Heart left ventricle (tissue), 16 donors: ENCODE measurements at regions of chr4 and their contacts with region 1.

Region 1: GRCh38 chr4:76515975-76516843 is 81.2 kb downstream of the SHROOM3 start:
- DNase-seq: no peak
- ATAC-seq: no peak
- H3K4me3 ChIP-seq: no peak overlapping the region
- H3K27ac ChIP-seq: no peak overlapping the region
- H3K4me1 ChIP-seq: peaks cover 0 to 8% (median 0%) of the 10 kb centered on the region in 12 donors
- H3K27me3 ChIP-seq: no peaks in the 10 kb centered on the region
- CTCF ChIP-seq: no peak
- POLR2A ChIP-seq: no peak

Region 2: GRCh38 chr4:76447393-76447851 is 68.8 kb before region 1 on chr4:
- intact Hi-C with region 1: no loop called
- DNase-seq: no peak
- ATAC-seq: peak in 1 of 4 donors; percentile 58
- H3K4me3 ChIP-seq: no peak overlapping the region
- H3K27ac ChIP-seq: peak overlapping the region in 1 of 12 donors; percentile 43
- H3K4me1 ChIP-seq: peaks cover 0 to 17% (median 1%) of the 10 kb centered on the region in 12 donors
- H3K27me3 ChIP-seq: no peaks in the 10 kb centered on the region
- CTCF ChIP-seq: no peak
- POLR2A ChIP-seq: no peak

Region 3: GRCh38 chr4:76658231-76659102 is 142.3 kb after region 1 on chr4:
- intact Hi-C with region 1: loop called in 3 of 10 experiments (anchors 10 kb)
- DNase-seq: no peak
- ATAC-seq: no peak
- H3K4me3 ChIP-seq: no peak overlapping the region
- H3K27ac ChIP-seq: peak overlapping the region in 1 of 12 donors; percentile 9
- H3K4me1 ChIP-seq: peaks cover 0 to 39% (median 11%) of the 10 kb centered on the region in 12 donors
- H3K27me3 ChIP-seq: no peaks in the 10 kb centered on the region
- CTCF ChIP-seq: no peak
- POLR2A ChIP-seq: no peak

Region 4: DNA sequence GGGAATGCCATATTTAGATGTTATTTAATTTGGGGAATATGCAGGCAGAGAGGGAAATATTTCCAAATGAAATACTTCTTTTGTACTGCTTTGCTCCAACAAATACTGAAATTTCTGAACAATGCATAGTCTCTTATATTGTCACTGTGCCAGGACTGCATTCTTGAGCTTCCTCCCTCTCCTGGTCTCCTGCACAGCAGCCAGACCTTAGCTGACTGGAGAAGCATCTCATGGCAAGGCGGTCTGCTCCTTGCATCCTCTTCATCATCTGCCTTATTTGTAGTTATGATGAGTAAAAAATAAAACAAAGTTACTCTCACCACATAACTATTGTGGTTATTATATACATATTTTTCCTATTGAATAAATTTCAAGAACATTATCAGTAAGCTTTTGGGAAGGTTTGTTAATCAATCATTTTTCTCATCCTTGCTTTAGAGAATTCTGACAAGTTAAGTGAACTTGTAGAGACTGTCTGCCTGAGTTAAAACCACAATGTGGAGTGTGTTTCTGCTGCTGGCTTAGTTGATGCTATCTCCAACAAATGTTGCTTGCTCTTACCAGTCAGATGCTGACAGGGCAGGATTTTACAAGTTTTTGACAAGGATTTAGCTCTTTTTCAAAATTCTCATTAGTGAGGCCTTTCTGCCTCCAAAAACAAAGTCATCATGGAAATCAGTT is 228.2 kb after region 1 on chr4:
- intact Hi-C with region 1: loop called in 2 of 10 experiments (anchors 5 kb)
- DNase-seq: no peak
- ATAC-seq: no peak
- H3K4me3 ChIP-seq: no peak overlapping the region
- H3K27ac ChIP-seq: no peak overlapping the region
- H3K4me1 ChIP-seq: peaks cover 0 to 10% (median 0%) of the 10 kb centered on the region in 12 donors
- H3K27me3 ChIP-seq: no peaks in the 10 kb centered on the region
- CTCF ChIP-seq: no peak
- POLR2A ChIP-seq: no peak

Region 5: GRCh38 chr4:76758290-76758882 is 242.2 kb after region 1 on chr4:
- intact Hi-C with region 1: loop called (anchors 2 to 5 kb)
- DNase-seq: no peak
- ATAC-seq: peak; percentile 36 to 66 (median 52)
- H3K4me3 ChIP-seq: no peak overlapping the region
- H3K27ac ChIP-seq: peak overlapping the region in 2 of 12 donors; percentile 2 to 5
- H3K4me1 ChIP-seq: peaks cover 0 to 29% (median 10%) of the 10 kb centered on the region in 12 donors
- H3K27me3 ChIP-seq: peaks cover 0 to 3% (median 0%) of the 10 kb centered on the region in 9 donors
- CTCF ChIP-seq: peak; percentile 66 to 87 (median 76)
- POLR2A ChIP-seq: no peak

Region 6: GRCh38 chr4:77044461-77045150 is 528.4 kb after region 1 on chr4:
- intact Hi-C with region 1: loop called in 7 of 10 experiments (anchors 2 to 10 kb)
- DNase-seq: no peak
- ATAC-seq: peak in 1 of 4 donors; percentile 29
- H3K4me3 ChIP-seq: no peak overlapping the region
- H3K27ac ChIP-seq: peak overlapping the region in 1 of 12 donors; percentile 25
- H3K4me1 ChIP-seq: peaks cover 0 to 19% (median 0%) of the 10 kb centered on the region in 12 donors
- H3K27me3 ChIP-seq: no peaks in the 10 kb centered on the region
- CTCF ChIP-seq: peak; percentile 40 to 67 (median 54)
- POLR2A ChIP-seq: no peak

Region 7: GRCh38 chr4:77203380-77204197 is 687.4 kb after region 1 on chr4:
- intact Hi-C with region 1: loop called in 7 of 10 experiments (anchors 2 to 10 kb)
- DNase-seq: peak in 4 of 5 donors; percentile 44 to 65 (median 54)
- ATAC-seq: peak; percentile 47 to 85 (median 82)
- H3K4me3 ChIP-seq: no peak overlapping the region
- H3K27ac ChIP-seq: no peak overlapping the region
- H3K4me1 ChIP-seq: peaks cover 0 to 4% (median 0%) of the 10 kb centered on the region in 12 donors
- H3K27me3 ChIP-seq: peaks cover 0 to 4% (median 0%) of the 10 kb centered on the region in 9 donors
- CTCF ChIP-seq: peak; percentile 54 to 83 (median 74)
- POLR2A ChIP-seq: no peak

Region 8: DNA sequence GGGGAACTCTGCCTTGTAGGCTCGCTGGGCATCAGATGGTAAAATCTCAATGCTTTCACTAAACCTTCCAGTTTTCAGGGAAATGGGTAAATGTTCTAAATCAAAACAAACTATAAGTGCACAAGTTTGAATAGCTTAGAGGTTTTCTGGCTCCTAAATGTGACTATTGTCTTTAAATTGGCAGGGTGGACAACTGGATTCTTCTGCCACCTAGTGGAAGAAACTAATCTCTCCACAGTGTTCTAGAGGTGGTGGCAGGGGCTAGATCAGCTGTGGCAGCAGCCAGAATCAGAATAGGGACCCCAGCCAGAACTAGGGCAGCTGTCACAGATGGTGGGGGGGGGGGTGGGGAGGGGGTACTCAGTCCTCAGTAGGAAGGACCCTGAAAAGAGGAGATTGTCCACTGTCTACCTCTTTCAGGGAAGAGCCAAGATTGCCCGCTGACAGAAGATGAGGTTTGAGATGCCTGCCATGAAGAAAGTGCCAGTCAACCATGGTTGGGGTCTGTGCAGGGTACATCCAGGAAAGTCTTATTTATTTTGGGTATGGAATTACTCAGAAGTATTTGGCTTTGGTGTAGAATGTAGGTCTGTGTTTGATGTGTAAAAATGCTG is 842.2 kb after region 1 on chr4:
- intact Hi-C with region 1: loop called in 1 of 10 experiments (anchors 10 kb)
- DNase-seq: peak in 1 of 5 donors; percentile 11
- ATAC-seq: peak in 3 of 4 donors; percentile 61 to 64 (median 63)
- H3K4me3 ChIP-seq: no peak overlapping the region
- H3K27ac ChIP-seq: no peak overlapping the region
- H3K4me1 ChIP-seq: no peaks in the 10 kb centered on the region
- H3K27me3 ChIP-seq: no peaks in the 10 kb centered on the region
- CTCF ChIP-seq: peak; percentile 39 to 67 (median 54)
- POLR2A ChIP-seq: no peak